ENCODE measurements at regions of chr6 and their contacts with region 1.

Region 1: GRCh38 chr6:158168040-158168289 is at the start of gene SERAC1:
- DNase-seq: no peak
- H3K4me3 Mint-ChIP-seq: peak within 1 kb of the TSS; percentile 83
- H3K27ac Mint-ChIP-seq: peak within 1 kb of the TSS; percentile 97
- H3K4me1 Mint-ChIP-seq: peaks cover 30% of the 10 kb centered on the region
- H3K27me3 Mint-ChIP-seq: no peaks in the 10 kb centered on the region
- total RNA-seq, gene SERAC1: 8.0 and 8.3 TPM in 2 replicates

Region 2: DNA sequence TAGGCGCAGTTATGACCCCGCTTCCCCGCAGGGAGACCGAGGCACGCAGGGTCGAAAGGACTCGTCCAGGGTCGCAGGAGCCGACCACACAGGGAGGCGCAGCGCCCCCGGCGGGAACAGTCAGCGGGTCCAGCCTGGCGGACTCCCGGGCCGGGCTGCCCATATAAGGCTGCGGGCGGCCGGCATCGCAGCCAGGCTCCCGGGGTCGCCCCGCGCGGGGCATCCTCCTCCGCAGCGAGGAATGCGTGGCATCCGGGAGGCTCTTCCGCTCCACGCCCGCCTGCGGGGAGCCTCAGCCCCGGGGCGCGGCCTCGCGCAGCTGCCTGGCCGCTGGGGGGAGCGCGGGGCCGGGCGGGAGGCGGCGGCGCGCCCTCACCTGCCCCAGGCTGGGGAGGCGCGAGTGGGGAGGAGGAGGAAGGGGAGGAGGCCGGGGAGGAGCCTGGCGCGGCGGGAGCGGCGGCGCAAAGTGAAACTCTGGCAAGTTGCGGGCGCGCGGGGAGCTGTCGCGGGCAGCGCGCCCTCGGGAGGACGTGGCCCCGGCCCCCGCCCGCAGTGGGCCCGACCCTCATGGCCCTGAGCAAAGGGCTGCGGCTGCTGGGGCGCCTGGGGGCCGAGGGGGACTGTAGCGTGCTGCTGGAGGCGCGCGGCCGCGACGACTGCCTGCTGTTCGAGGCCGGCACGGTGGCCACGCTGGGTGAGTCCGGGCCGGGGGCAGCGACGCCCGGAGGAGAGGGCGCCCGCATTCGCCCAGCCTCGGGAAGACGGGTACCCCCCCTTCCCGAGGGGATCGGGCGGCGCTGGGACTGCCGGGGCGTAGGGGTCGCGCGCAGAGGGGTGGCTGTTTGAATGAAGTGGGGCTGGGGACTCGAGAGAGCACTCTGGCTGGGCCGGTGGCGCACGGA is 186.3 kb before region 1 on chr6 and contains the start of gene SYNJ2:
- intact Hi-C with region 1: loop called (anchors 5 kb)
- DNase-seq: peak; percentile 85
- H3K4me3 Mint-ChIP-seq: peak within 1 kb of the TSS; percentile 95
- H3K27ac Mint-ChIP-seq: peak within 1 kb of the TSS; percentile 84
- H3K4me1 Mint-ChIP-seq: peaks cover 49% of the 10 kb centered on the region
- H3K27me3 Mint-ChIP-seq: peaks cover 10% of the 10 kb centered on the region
- total RNA-seq, gene SYNJ2: 29.0 and 31.2 TPM in 2 replicates

Region 3: GRCh38 chr6:158194487-158195280 is 26.7 kb after region 1 on chr6:
- intact Hi-C with region 1: loop called (anchors 1 kb)
- DNase-seq: no peak
- H3K4me3 Mint-ChIP-seq: no peak overlapping the region
- H3K27ac Mint-ChIP-seq: no peak overlapping the region
- H3K4me1 Mint-ChIP-seq: no peaks in the 10 kb centered on the region
- H3K27me3 Mint-ChIP-seq: peaks cover 1% of the 10 kb centered on the region

Region 4: DNA sequence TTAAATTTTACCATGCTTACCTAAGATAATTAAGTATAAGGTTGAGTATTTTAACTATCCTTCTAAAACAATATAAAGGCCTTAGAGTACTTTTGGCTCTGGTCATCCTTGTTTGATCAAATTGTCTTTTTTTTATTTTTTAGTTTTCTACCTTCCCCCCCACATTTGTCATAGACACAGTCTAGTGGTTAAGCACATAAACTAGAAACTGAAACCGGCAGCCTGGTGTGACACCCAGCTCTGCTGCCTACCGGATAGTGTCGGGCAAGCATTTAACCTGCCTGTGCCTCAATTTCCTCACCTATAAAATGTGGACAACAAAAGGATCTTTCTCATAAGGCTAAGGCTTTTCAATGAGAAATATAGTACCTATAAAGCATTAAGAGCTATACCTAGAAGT is 122.7 kb after region 1 on chr6:
- intact Hi-C with region 1: no loop called
- DNase-seq: peak; percentile 52
- H3K4me3 Mint-ChIP-seq: peak overlapping the region; percentile 64
- H3K27ac Mint-ChIP-seq: peak overlapping the region; percentile 79
- H3K4me1 Mint-ChIP-seq: peaks cover 42% of the 10 kb centered on the region
- H3K27me3 Mint-ChIP-seq: no peaks in the 10 kb centered on the region

Region 5: DNA sequence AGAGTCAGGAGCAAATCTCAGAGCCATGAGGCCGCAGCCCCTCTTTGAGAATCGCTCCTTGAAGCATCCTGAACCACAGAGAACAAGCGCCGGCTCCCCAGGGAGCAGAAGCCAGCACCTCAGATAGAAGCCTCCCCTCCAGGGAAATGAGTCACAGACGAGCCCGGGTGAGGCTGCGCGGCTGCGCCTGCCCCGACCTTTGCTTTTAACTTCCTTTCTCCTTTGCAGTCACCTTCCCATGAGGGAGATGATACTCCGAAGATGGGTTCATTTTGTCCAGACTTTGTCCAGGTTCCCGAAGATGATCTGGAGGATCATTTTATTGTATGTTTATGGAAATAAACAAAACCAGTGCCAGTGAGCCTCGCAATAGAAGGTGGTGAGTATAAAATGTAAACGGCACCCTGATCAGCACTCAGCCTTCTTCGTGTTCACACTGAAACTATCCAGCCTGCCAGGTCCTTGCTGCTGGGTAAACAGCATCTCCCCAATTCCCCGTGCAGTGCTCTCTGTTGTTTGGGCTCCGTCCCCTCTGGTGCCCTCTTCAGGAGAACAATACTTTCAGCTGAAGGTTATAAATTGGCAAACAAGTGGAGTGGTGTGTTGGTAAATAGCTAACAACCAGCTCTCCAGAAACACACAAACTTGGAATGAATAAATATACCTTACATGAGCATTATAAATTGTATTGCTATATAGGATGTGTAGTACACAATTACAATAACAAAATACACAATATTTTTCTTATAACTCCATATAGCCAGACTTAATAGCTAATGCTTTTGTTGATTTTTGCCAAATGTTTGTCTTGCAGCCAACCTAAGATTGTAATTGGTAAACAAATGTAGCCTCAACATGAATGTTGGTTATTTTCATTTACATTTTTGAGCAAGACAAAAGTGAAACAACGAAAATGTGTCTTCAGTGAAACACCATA is 350.5 kb after region 1 on chr6:
- intact Hi-C with region 1: loop called (anchors 1 kb)
- DNase-seq: peak; percentile 60
- H3K4me3 Mint-ChIP-seq: peak overlapping the region; percentile 86
- H3K27ac Mint-ChIP-seq: peak overlapping the region; percentile 87
- H3K4me1 Mint-ChIP-seq: peaks cover 34% of the 10 kb centered on the region
- H3K27me3 Mint-ChIP-seq: peaks cover 20% of the 10 kb centered on the region

Region 6: GRCh38 chr6:158571826-158572652 is 404.1 kb after region 1 on chr6:
- intact Hi-C with region 1: no loop called
- DNase-seq: no peak
- H3K4me3 Mint-ChIP-seq: no peak overlapping the region
- H3K27ac Mint-ChIP-seq: no peak overlapping the region
- H3K4me1 Mint-ChIP-seq: peaks cover 48% of the 10 kb centered on the region
- H3K27me3 Mint-ChIP-seq: no peaks in the 10 kb centered on the region

Region 7: DNA sequence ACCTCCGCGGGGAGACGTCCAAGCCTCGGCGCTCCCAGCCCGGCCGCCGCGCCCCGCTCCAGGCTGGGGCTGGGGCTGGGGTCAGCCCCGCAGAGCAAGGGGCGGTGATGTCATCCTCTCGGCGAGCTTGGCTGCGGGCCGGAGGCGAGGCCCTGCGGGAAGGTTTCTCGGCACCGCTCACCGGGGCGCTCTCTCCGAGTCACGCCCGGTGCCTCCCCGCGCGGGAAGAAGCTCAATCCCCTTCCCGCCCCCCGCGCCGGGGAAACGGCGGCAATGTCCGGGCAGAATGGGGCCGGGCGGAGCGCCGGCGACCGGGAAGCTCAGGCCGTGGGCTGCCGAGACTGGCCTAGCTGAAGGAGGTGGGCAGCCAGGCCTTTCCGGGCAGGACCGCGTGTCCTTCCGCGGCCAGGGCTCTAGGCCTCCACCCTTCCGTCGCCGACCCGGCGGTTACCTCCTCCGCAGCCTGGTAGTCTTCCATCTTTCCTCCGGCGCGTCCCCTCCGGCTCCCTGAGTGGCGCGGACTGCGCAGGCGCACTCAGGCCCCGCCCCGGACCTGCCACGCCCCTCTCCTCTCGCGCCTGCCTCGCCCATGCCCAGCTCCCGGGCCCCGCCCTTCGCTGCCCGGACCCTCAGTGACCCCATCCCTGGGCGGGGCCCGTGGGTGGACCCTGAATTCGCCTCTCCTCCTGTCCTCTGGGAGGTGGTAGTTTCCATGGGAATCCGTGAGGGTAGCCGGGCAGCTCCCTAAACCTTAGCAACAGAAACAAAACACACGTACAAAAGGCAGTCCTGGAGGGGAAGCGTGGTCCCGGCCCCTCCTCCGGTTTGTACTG is 476.5 kb after region 1 on chr6 and contains the start of gene DYNLT1:
- intact Hi-C with region 1: loop called (anchors 5 kb)
- DNase-seq: peak; percentile 91
- H3K4me3 Mint-ChIP-seq: peak within 1 kb of the TSS; percentile 99
- H3K27ac Mint-ChIP-seq: peak within 1 kb of the TSS; percentile 97
- H3K4me1 Mint-ChIP-seq: peaks cover 81% of the 10 kb centered on the region
- H3K27me3 Mint-ChIP-seq: no peaks in the 10 kb centered on the region
- total RNA-seq, gene DYNLT1: 103 and 105 TPM in 2 replicates